Prostate gland (tissue), 2 donors: ENCODE measurements at regions of chr7 and their contacts with region 1.

Region 1: DNA sequence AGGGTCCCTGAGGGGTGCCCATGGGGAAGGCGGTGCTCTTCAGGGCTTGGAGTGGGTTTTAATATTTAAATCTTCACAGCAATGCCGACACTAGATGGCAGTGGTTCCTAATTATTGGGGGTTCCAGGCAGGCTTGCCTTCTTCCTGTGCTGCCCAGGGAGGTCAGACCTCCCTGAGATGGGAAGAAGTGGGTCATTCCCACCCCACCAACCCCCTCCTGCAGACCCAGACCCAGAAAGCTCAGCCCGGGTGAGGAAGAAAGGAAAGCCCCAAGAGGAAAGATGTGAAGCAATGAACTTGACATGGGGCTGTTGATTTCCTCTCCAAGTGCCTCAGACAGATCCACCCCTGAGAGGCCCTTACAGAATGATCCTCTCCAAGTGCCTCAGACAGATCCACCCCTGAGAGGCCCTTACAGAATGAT is 85.1 kb upstream of the LANCL2 start:
- DNase-seq: peak; percentile 55
- H3K4me3 ChIP-seq: no peak overlapping the region
- H3K27ac ChIP-seq: no peak overlapping the region
- H3K4me1 ChIP-seq: no peaks in the 10 kb centered on the region
- H3K27me3 ChIP-seq: no peaks in the 10 kb centered on the region
- CTCF ChIP-seq: peak in 3 of 4 experiments; percentile 60 to 71 (median 61)
- POLR2A ChIP-seq: no peak

Region 2: DNA sequence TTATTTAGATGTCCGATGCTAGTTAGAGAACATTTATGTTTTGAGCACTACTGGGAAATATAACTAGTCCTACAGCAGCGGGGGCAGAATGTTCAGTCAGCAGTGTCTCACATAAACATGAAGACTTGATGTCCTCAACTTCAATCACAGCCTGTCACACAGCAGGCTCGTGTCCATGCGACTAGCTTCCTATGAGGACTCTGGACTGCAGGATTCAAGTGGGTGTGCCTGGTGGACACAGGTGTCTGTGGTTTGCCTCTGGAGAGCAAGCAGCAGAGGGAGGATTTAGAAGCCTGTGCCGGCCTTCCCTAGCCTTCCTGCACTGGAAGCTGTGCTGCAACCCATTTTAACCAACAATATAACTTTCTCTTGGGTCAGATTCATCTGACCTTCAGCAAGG is 55.1 kb after region 1 on chr7:
- intact Hi-C with region 1: no loop called
- DNase-seq: no peak
- H3K4me3 ChIP-seq: no peak overlapping the region
- H3K27ac ChIP-seq: no peak overlapping the region
- H3K4me1 ChIP-seq: no peaks in the 10 kb centered on the region
- H3K27me3 ChIP-seq: no peaks in the 10 kb centered on the region
- CTCF ChIP-seq: no peak
- POLR2A ChIP-seq: no peak

Region 3: GRCh38 chr7:55415173-55415778 is 135.2 kb after region 1 on chr7:
- intact Hi-C with region 1: loop called (anchors 2 kb)
- DNase-seq: peak; percentile 78
- H3K4me3 ChIP-seq: no peak overlapping the region
- H3K27ac ChIP-seq: no peak overlapping the region
- H3K4me1 ChIP-seq: no peaks in the 10 kb centered on the region
- H3K27me3 ChIP-seq: no peaks in the 10 kb centered on the region
- CTCF ChIP-seq: peak; percentile 49 to 91 (median 76)
- POLR2A ChIP-seq: no peak

Region 4: DNA sequence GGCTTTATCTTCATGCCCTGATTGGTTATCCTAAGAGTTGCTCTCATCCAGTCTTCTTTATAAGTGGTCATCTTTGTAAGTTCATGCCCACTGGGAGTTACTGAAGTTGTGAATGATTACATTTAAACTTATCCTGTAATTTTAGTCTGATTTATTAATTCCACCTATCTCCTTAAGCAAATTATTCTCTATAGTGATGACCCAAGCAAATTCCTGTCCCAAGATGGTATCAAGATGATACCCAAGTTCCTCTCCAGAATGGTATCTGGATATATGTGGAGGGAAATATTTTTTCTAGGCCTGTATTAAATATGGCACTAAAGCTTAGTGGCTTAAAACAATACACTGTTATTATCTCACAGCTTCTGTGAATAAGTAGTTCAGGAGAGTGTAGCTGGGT is 314.8 kb after region 1 on chr7:
- intact Hi-C with region 1: loop called (anchors 5 kb)
- DNase-seq: no peak
- H3K4me3 ChIP-seq: no peak overlapping the region
- H3K27ac ChIP-seq: no peak overlapping the region
- H3K4me1 ChIP-seq: no peaks in the 10 kb centered on the region
- H3K27me3 ChIP-seq: no peaks in the 10 kb centered on the region
- CTCF ChIP-seq: no peak
- POLR2A ChIP-seq: no peak